KBM-7 (cell line): ENCODE measurements at regions of chr1 and their contacts with region 1.

Region 1: DNA sequence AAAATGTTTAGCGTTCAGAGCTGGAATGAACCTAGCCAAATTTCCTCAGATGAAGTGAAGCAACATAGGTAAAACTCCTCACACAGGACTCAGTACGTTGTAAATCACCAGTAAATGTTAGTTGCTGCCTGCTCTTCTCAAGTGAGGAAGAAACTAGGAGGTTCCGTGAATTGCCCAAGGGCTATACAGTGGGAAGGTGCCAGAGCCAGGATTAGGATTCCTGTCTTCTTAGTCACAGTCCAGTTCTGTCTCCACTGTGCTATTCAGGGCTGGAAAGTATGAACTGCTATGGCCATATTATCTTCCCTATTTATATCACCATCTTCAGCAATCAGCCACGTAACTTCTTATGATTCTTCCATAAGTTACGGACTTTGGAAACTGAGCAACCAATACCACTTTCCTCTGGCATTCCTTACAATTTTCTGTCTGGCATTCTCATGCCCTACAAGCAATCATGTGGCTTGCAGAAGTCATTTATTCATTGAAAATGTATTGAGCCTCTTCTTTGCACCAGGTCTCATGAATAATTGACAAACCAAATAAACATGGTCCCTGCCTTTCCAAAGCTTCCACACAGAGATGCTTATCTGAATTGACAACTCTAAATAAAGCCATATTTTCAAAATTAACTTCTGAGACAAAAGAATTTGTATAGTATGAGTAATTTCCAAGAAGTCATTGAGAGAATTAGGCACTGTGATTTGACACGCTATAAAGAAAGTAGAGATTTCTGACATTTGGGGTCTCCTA is 271.6 kb upstream of the SGIP1 start:
- DNase-seq: no peak

Region 2: DNA sequence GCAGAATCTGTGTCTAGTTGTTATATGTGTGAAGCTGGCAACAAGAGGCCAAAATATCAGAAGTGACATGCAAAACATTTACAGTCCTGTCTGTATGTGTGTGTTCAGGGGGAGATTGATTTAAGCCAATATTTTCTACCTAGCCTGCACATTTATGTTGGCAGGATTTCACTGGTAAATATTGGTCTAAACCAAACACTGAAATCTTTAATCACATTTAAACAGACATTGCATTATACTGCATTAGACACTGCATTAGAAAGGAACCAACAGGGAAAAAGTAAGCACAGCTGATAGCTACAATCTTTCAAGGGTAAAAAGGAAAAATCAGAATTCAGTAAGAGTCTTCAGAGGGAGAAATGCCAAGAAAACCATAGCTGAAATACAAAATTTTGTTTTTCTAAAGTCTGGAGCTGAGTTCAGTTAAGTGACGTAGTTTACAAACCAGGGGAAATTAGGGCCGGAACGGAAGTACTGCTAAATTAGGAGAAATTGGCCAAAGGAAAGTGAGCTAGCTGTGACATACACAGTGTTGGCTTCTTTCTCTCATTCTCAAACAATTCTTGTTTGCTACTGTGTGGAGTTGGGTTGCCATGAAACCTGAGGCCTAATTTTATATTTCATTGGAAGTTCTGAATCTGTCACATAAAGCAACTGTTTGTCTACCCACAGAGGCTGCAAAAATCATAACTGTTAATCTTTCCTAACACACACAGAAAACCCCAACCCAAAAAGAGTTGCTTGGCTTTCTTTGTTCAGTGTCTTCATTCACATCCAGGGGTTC is 54.3 kb after region 1 on chr1:
- in situ Hi-C with region 1: loop called (anchors 10 kb)
- DNase-seq: no peak